GM12878 (cell line): ENCODE measurements at regions of chr7 and their contacts with region 1.

Region 1: DNA sequence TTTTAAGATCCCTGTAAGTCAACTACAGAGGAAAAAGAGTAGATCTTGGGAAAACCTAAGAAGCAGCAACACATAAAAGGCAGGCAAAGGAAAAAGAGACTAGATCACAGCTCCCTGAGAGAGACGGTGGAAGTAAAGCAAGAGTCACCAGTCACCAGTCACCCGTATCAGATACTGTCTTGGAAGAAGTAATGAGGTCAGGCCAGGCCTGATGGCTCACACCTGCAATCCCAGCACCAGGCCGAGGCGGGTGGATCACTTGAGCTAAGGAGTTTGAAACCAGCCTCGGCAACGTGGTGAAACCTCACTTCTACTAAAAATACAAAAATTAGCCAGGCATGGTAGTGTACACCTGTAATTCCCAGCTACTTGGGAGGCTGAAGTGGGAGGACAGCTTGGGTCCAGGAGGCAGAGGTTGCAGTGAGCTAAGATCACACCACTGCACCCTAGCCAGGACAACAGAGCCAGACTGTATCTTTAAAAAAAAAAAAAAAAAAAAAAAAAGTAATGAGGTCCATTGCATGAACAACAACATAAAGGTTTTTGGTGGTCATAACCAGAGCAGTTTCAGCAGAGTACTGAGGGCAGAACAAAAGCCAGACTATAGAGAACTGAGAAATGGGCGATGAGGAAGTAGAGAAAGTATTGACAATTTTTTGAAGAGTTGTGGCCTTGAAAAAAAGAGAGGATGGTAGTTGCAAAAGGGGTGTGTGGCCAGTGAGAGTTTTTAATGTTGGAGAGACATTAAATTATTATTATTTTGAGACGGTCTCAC is 16.9 kb downstream of the ZNF713 start:
- DNase-seq: peak; percentile 53
- ATAC-seq: peak; percentile 97
- H3K4me3 ChIP-seq: no peak overlapping the region
- H3K27ac ChIP-seq: peak overlapping the region; percentile 39; the same call in 1 of the 2 replicates
- H3K4me1 ChIP-seq: peaks cover 11% of the 10 kb centered on the region; the same call in 1 of the 2 replicates
- H3K27me3 ChIP-seq: no peaks in the 10 kb centered on the region
- CTCF ChIP-seq: no peak
- EP300 ChIP-seq: peak; percentile 33 to 41; a peak in 1 of 4 replicates
- POLR2A ChIP-seq: no peak
- RAD21 ChIP-seq: no peak

Region 2: DNA sequence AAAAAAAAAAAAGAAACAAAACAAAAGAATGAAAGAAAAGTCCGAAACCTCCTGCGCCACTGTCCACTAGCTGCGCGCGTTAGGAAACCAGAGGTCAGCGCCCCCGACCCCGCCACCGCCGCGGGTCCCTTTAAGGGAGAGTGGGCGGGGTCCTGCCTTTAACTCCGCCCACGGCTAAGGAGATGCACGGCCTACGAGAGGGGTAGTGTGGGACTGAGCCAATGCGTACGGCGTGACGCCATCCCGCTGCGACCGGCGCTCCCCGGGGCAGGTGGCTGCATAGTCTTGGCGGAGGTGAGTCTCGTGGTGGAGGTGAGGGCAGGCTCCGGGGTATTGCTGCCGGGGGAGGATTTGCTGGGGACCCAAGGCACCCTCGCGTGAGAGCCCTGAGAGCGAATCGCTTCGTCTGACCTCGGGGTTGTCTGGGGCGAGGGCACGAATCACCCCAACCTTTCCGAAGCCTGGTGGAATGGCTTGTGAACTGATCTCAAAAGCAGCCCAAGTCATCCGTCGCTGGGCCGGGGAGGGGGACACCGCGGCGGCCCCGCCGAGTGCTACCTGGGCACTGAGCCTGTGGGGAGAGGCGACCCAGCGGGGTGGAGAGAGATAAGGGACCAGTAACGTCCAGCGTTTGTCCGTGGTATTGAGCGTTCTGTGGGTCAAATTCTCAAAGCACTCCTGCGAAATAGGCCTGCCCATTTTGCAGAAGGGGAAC is 47.6 kb after region 1 on chr7 and contains the start of gene MRPS17:
- CTCF ChIA-PET with region 1: no interaction called
- POLR2A ChIA-PET with region 1: no interaction called
- RAD21 ChIA-PET with region 1: no interaction called
- SMC1A ChIA-PET with region 1: no interaction called
- in situ Hi-C with region 1: no loop called
- intact Hi-C with region 1: loop called (anchors 5 kb)
- DNase-seq: peak; percentile 72
- ATAC-seq: peak; percentile 100
- H3K4me3 ChIP-seq: peak within 1 kb of the TSS; percentile 97
- H3K27ac ChIP-seq: peak within 1 kb of the TSS; percentile 87
- H3K4me1 ChIP-seq: no peaks in the 10 kb centered on the region
- H3K27me3 ChIP-seq: no peaks in the 10 kb centered on the region
- CTCF ChIP-seq: no peak
- EP300 ChIP-seq: no peak
- POLR2A ChIP-seq: peak; percentile 99
- RAD21 ChIP-seq: no peak
- polyA plus RNA-seq, gene MRPS17: 72.9 to 74.5 TPM